PC-9 (cell line): ENCODE measurements at regions of chr6 and their contacts with region 1.

Region 1: GRCh38 chr6:27608916-27609883 is 136.3 kb upstream of the ZNF184 start:
- DNase-seq: peak; percentile 68 to 71
- H3K4me3 ChIP-seq: no peak overlapping the region
- H3K27ac ChIP-seq: no peak overlapping the region
- H3K4me1 ChIP-seq: 0 out of 2 replicates have a peak, but pooled peaks cover 8% of the 10 kb centered on the region
- H3K27me3 ChIP-seq: no peaks in the 10 kb centered on the region
- CTCF ChIP-seq: peak; percentile 77

Region 2: GRCh38 chr6:27146706-27147505 is 462.3 kb before region 1 on chr6:
- CTCF ChIA-PET with region 1: no interaction called
- POLR2A ChIA-PET with region 1: interaction called, 23 read pairs
- intact Hi-C with region 1: no loop called
- DNase-seq: peak; percentile 89 to 98
- H3K4me3 ChIP-seq: peak overlapping the region; percentile 91
- H3K27ac ChIP-seq: peak overlapping the region; percentile 75
- H3K4me1 ChIP-seq: peaks cover 2% of the 10 kb centered on the region; the same call in 1 of the 2 replicates
- H3K27me3 ChIP-seq: no peaks in the 10 kb centered on the region
- CTCF ChIP-seq: no peak

Region 3: GRCh38 chr6:27295301-27296081 is 313.7 kb before region 1 on chr6:
- CTCF ChIA-PET with region 1: no interaction called
- POLR2A ChIA-PET with region 1: no interaction called
- intact Hi-C with region 1: loop called (anchors 5 kb)
- DNase-seq: peak; percentile 49 to 73
- H3K4me3 ChIP-seq: peak overlapping the region; percentile 84
- H3K27ac ChIP-seq: no peak overlapping the region
- H3K4me1 ChIP-seq: peaks cover 27% of the 10 kb centered on the region
- H3K27me3 ChIP-seq: no peaks in the 10 kb centered on the region
- CTCF ChIP-seq: no peak

Region 4: GRCh38 chr6:27503436-27504030 is 105.7 kb before region 1 on chr6:
- CTCF ChIA-PET with region 1: interaction called, 3 read pairs
- POLR2A ChIA-PET with region 1: no interaction called
- intact Hi-C with region 1: loop called (anchors 5 kb)
- DNase-seq: peak; percentile 66 to 75
- H3K4me3 ChIP-seq: peak overlapping the region; percentile 73
- H3K27ac ChIP-seq: peak overlapping the region; percentile 57
- H3K4me1 ChIP-seq: peaks cover 26% of the 10 kb centered on the region
- H3K27me3 ChIP-seq: no peaks in the 10 kb centered on the region
- CTCF ChIP-seq: no peak

Region 5: GRCh38 chr6:27582928-27583725 is 26.1 kb before region 1 on chr6:
- CTCF ChIA-PET with region 1: no interaction called
- POLR2A ChIA-PET with region 1: no interaction called
- intact Hi-C with region 1: no loop called
- DNase-seq: peak; percentile 52 to 73
- H3K4me3 ChIP-seq: peak overlapping the region; percentile 54
- H3K27ac ChIP-seq: no peak overlapping the region
- H3K4me1 ChIP-seq: peaks cover 11% of the 10 kb centered on the region
- H3K27me3 ChIP-seq: no peaks in the 10 kb centered on the region
- CTCF ChIP-seq: no peak

Region 6: GRCh38 chr6:27687154-27688013 is 78.2 kb after region 1 on chr6:
- CTCF ChIA-PET with region 1: no interaction called
- POLR2A ChIA-PET with region 1: no interaction called
- intact Hi-C with region 1: loop called (anchors 5 kb)
- DNase-seq: peak; percentile 69 to 87
- H3K4me3 ChIP-seq: peak overlapping the region; percentile 61
- H3K27ac ChIP-seq: peak overlapping the region; percentile 6; the same call in 1 of the 2 replicates
- H3K4me1 ChIP-seq: peaks cover 6% of the 10 kb centered on the region; the same call in 1 of the 2 replicates
- H3K27me3 ChIP-seq: no peaks in the 10 kb centered on the region
- CTCF ChIP-seq: peak; percentile 73; the same call in 1 of the 2 replicates

Region 7: DNA sequence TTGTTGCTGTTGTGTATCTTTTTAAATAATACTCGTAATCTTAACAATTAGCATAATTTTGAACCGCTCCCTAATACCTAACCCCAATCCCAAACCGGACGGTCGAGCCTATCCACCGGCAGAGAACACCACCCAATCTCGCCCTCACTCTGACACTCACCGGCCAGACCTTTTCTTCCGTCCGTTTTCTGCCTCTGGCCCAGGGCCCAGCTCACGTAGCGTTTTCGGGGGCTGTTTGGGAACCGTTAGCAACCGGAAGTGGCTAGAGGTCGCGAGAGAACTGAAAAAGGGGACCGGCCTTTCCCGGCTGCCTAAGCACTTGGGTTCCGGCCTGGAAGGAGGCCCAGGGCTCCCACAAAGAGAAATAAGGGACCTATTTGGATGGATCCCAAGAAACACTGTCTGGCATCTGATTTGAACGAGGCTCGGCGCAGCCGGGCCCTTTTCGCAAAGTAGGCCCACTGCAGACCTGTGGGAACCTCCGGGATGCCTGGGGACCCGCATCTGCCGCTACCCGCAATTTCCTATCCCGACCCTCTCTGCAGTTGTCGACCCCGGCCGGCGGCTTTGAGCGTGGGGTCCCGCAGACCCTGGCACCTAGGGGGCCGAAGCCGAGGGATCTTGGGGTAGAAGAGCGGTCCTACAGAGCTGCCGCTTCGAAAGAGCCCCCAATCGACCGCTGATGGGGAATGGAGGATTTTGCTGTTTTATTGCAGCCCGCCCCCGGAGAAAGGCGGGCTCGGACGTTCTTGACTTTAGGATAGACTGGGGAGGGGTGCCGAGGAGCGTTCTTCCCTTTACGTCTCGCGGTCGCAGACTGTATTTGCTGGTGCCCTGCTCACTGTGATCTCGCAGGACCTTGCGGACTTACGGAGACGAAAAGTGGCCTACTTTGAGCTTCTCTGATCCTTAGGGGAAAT is 527.6 kb after region 1 on chr6:
- CTCF ChIA-PET with region 1: no interaction called
- POLR2A ChIA-PET with region 1: interaction called, 11 read pairs
- intact Hi-C with region 1: no loop called
- DNase-seq: peak; percentile 77 to 87
- H3K4me3 ChIP-seq: peak overlapping the region; percentile 84
- H3K27ac ChIP-seq: peak overlapping the region; percentile 17; the same call in 1 of the 2 replicates
- H3K4me1 ChIP-seq: peaks cover 18% of the 10 kb centered on the region
- H3K27me3 ChIP-seq: no peaks in the 10 kb centered on the region
- CTCF ChIP-seq: no peak